ENCODE measurements at regions of chr1 and their contacts with region 1.

Region 1: DNA sequence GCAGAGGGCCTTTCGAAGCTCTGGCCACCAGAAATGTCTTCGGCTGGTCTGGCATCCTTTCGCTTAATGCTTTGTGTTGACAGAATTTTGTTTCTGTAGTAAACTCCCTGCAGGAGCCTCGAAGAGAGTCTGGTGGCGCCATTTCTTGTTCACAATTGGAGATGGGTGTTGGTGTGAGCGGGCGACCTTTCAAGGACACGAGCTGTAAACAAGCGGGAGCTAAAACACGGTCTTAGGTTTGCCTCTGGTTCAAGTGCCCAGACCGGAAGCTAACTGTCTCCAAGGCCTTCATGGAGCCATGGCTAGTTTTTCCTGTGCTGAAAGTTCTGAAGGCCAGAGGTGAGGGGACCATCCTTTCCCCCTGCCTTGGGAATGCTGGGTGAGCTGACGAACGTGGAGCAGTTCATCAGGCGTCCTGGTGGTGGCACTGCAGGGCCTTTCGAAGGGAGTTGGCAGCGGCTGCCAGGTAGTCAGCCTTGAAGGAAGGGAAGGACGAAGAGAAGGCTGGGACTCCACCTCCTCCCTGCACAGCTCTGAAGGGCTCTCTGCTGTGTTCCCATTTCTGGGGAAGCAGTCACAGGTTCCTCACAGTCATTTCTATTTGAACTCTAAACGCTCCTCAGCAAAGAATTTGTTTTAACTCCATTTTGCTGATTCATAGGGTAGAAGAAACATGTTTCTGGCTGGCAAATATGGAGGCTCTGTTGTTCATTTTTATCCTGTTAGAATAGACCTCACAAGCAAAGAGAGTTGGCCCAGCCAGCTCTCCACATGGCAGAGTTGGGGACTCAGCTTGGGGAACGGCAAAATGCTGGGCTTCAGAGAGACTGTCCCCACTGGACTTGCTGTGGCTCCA is 35.2 kb downstream of the URB2 start:
- DNase-seq: peak; percentile 65
- ATAC-seq: peak; percentile 92
- H3K4me3 ChIP-seq: no peak overlapping the region
- H3K27ac ChIP-seq: no peak overlapping the region
- H3K4me1 ChIP-seq: peaks cover 6% of the 10 kb centered on the region
- H3K27me3 ChIP-seq: no peaks in the 10 kb centered on the region
- CTCF ChIP-seq: peak; percentile 84
- POLR2A ChIP-seq: no peak
- RAD21 ChIP-seq: peak; percentile 85

Region 2: GRCh38 chr1:229856009-229856650 is 194.9 kb after region 1 on chr1:
- CTCF ChIA-PET with region 1: no interaction called
- POLR2A ChIA-PET with region 1: no interaction called
- dilution Hi-C with region 1: no loop called
- in situ Hi-C with region 1: no loop called
- intact Hi-C with region 1: loop called (anchors 10 kb)
- DNase-seq: no peak
- ATAC-seq: peak; percentile 70
- H3K4me3 ChIP-seq: peak overlapping the region; percentile 6; the same call in 1 of the 2 replicates
- H3K27ac ChIP-seq: no peak overlapping the region
- H3K4me1 ChIP-seq: no peaks in the 10 kb centered on the region
- H3K27me3 ChIP-seq: peaks cover 2% of the 10 kb centered on the region; the same call in 1 of the 2 replicates
- CTCF ChIP-seq: no peak
- POLR2A ChIP-seq: no peak
- RAD21 ChIP-seq: no peak

Region 3: GRCh38 chr1:230215031-230215430 is 553.8 kb after region 1 on chr1:
- CTCF ChIA-PET with region 1: no interaction called
- POLR2A ChIA-PET with region 1: interaction called, 3 read pairs
- dilution Hi-C with region 1: no loop called
- in situ Hi-C with region 1: no loop called
- intact Hi-C with region 1: loop called (anchors 1 kb)
- DNase-seq: peak; percentile 64
- ATAC-seq: peak; percentile 48
- H3K4me3 ChIP-seq: no peak overlapping the region
- H3K27ac ChIP-seq: no peak overlapping the region
- H3K4me1 ChIP-seq: peaks cover 9% of the 10 kb centered on the region
- H3K27me3 ChIP-seq: no peaks in the 10 kb centered on the region
- CTCF ChIP-seq: peak; percentile 51
- POLR2A ChIP-seq: no peak
- RAD21 ChIP-seq: peak; percentile 64

Region 4: DNA sequence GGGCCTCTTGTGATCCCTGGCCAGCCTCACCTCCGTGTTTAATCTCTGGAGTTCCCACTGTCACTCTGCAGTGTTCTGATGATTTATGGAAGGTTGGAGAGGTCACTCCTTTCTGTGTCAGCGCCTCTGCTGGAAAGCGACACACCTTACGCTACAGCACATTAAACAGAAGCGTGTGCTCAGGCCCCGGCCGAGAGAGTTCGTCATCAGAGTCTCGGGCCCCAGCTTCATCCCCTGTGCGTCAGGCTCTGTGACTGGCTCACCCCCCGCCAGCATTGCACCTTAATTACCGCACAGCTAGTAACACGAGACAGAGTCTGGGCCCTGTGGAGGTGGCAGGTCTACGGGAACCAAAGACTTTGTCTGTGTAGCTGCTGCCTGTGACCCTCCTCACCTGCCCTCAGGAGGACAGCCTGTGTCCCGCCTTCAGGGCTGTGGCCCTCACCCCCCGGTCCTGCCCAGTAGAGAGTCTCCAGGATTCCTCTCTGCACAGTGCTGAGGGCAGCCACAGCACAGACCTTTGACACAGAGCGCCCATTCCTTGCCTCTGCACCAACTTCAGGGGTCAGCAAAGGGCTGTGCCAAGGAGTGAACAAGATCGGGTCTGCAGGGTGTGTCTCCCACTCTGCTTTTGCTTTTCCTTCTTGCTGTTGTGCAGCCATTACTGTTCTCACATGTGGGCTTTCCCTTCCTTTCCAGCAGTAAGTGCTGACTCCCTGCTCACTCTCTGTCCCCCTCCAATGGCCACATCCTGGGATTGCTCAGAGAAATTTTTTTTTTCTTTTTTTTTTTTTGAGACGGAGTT is 607.3 kb after region 1 on chr1:
- CTCF ChIA-PET with region 1: interaction called, 3 read pairs
- POLR2A ChIA-PET with region 1: no interaction called
- dilution Hi-C with region 1: no loop called
- in situ Hi-C with region 1: no loop called
- intact Hi-C with region 1: loop called (anchors 1 kb)
- DNase-seq: peak; percentile 75
- ATAC-seq: peak; percentile 98
- H3K4me3 ChIP-seq: no peak overlapping the region
- H3K27ac ChIP-seq: no peak overlapping the region
- H3K4me1 ChIP-seq: peaks cover 3% of the 10 kb centered on the region; the same call in 1 of the 2 replicates
- H3K27me3 ChIP-seq: no peaks in the 10 kb centered on the region
- CTCF ChIP-seq: peak; percentile 84
- POLR2A ChIP-seq: no peak
- RAD21 ChIP-seq: peak; percentile 85

Measured in IMR-90 (cell line).